Mammary epithelial cell (primary cell): ENCODE measurements at regions of chr19 and their contacts with region 1.

Region 1: DNA sequence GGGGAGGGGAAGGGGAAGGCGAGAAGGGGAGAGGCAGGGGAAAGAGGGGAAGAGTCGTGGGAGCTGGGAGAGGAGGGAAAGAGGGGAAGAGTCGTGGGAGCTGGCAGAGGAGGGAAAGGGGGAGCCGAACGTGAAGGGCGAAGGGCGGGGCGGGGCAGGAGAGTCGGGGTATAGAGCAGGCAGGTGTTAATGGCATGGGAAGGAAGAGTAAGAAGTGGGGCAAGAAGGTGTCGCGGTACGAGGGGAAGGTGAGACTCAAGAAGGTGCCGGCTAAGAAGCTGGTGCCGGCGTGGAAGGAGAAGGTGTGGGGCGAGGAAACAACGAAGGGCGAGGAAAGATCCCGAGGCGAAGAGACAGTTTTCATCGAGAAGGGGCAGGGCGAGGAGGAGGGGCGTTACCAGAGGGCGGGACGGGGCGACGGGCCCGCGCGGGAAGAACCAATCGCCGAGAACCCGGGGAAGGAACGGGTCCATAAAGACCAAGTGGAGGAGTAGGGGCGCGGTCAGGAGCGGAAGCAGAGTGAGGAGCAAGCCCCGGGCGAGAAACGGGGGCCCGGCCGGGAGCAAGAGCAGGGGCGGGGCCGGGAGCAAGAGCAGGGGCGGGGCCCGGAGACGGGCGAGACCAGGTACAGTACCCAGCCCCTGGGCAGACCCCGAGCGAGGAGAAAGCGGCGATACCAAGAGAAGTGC is 463 bp downstream of the CATSPERG start:
- DNase-seq: peak; percentile 97
- H3K4me3 ChIP-seq: peak overlapping the region; percentile 66 to 74 (median 69)
- H3K27ac ChIP-seq: peak overlapping the region; percentile 75
- H3K4me1 ChIP-seq: peaks cover 15% of the 10 kb centered on the region
- H3K27me3 ChIP-seq: no peaks in the 10 kb centered on the region
- CTCF ChIP-seq: no peak

Region 2: GRCh38 chr19:37699127-37699526 is 637.0 kb before region 1 on chr19:
- CTCF ChIA-PET with region 1: no interaction called
- dilution Hi-C with region 1: no loop called
- in situ Hi-C with region 1: no loop called
- intact Hi-C with region 1: no loop called
- DNase-seq: no peak
- H3K4me3 ChIP-seq: no peak overlapping the region
- H3K27ac ChIP-seq: no peak overlapping the region
- H3K4me1 ChIP-seq: no peaks in the 10 kb centered on the region
- H3K27me3 ChIP-seq: no peaks in the 10 kb centered on the region
- CTCF ChIP-seq: no peak

Region 3: DNA sequence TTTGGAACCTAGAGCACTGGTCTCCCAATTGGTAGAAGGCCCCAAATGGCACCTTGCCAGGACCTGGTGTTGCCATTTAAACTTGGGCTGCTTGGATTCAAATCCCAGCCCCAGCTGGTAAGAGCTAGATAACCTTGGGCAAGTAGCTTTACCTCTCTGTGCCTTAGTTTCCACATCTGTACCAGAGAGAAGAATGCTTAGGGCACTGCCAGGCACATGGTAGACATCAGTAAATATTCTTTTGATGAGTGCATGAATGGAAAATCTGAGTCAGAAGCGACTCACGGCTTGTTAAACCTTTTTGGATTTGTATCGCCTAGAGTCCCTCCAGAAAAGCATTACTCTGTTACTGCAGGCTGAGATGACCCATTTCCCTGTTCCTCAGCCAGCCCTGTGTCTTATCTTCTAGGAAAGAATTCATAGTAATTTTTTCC is 338.2 kb before region 1 on chr19:
- CTCF ChIA-PET with region 1: no interaction called
- dilution Hi-C with region 1: no loop called
- in situ Hi-C with region 1: no loop called
- intact Hi-C with region 1: loop called (anchors 10 kb)
- DNase-seq: peak; percentile 91
- H3K4me3 ChIP-seq: no peak overlapping the region
- H3K27ac ChIP-seq: peak overlapping the region; percentile 57
- H3K4me1 ChIP-seq: peaks cover 31% of the 10 kb centered on the region
- H3K27me3 ChIP-seq: no peaks in the 10 kb centered on the region
- CTCF ChIP-seq: no peak

Region 4: DNA sequence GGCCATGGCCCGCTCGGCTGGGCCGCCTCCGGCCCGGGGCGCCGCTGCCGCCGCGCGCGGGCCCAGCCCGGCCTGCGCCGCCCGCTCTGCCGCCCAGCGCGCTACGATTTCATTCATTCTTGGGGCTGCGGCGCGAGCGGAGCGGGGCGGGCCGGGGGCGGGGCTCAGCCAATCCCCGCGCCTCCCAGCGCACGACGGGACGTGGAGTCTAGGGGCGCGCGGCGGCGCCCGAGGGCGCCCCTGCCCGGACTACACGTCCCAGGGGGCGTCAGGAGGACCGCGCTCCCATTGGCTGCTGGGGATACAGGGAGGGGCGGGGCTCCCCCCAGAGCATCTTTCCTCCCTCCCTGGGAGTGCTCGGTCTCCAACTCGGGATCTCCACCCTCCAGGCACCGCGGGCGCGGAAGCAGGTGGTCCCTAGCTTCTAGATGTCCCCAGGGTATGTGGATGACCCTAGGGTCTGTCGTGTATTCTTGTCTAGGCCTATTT is 106.5 kb before region 1 on chr19:
- CTCF ChIA-PET with region 1: no interaction called
- dilution Hi-C with region 1: no loop called
- in situ Hi-C with region 1: no loop called
- intact Hi-C with region 1: loop called (anchors 2 kb)
- DNase-seq: peak; percentile 79
- H3K4me3 ChIP-seq: no peak overlapping the region
- H3K27ac ChIP-seq: no peak overlapping the region
- H3K4me1 ChIP-seq: peaks cover 14% of the 10 kb centered on the region
- H3K27me3 ChIP-seq: peaks cover 12% of the 10 kb centered on the region
- CTCF ChIP-seq: no peak

Region 5: GRCh38 chr19:38245826-38246498 is 90.1 kb before region 1 on chr19:
- CTCF ChIA-PET with region 1: no interaction called
- dilution Hi-C with region 1: no loop called
- in situ Hi-C with region 1: loop called (anchors 5 kb)
- intact Hi-C with region 1: loop called (anchors 1 kb)
- DNase-seq: no peak
- H3K4me3 ChIP-seq: no peak overlapping the region
- H3K27ac ChIP-seq: no peak overlapping the region
- H3K4me1 ChIP-seq: peaks cover 2% of the 10 kb centered on the region
- H3K27me3 ChIP-seq: no peaks in the 10 kb centered on the region
- CTCF ChIP-seq: no peak

Region 6: GRCh38 chr19:38321646-38322196 is 14.4 kb before region 1 on chr19:
- CTCF ChIA-PET with region 1: no interaction called
- dilution Hi-C with region 1: no loop called
- in situ Hi-C with region 1: no loop called
- intact Hi-C with region 1: loop called (anchors 1 kb)
- DNase-seq: peak; percentile 88
- H3K4me3 ChIP-seq: peak overlapping the region in 1 of 3 experiments; percentile 5
- H3K27ac ChIP-seq: peak overlapping the region; percentile 44
- H3K4me1 ChIP-seq: peaks cover 39% of the 10 kb centered on the region
- H3K27me3 ChIP-seq: no peaks in the 10 kb centered on the region
- CTCF ChIP-seq: no peak

Region 7: GRCh38 chr19:38374429-38375176 is 38.5 kb after region 1 on chr19 and contains the start of gene PSMD8:
- CTCF ChIA-PET with region 1: interaction called, 6 read pairs
- dilution Hi-C with region 1: no loop called
- in situ Hi-C with region 1: no loop called
- intact Hi-C with region 1: loop called (anchors 1 kb)
- DNase-seq: peak; percentile 99
- H3K4me3 ChIP-seq: peak within 1 kb of the TSS; percentile 79 to 94 (median 93)
- H3K27ac ChIP-seq: peak within 1 kb of the TSS; percentile 83
- H3K4me1 ChIP-seq: peaks cover 14% of the 10 kb centered on the region
- H3K27me3 ChIP-seq: no peaks in the 10 kb centered on the region
- CTCF ChIP-seq: peak in 1 of 2 donors; percentile 33
- total RNA-seq, gene PSMD8: 247 to 401 TPM

Region 8: DNA sequence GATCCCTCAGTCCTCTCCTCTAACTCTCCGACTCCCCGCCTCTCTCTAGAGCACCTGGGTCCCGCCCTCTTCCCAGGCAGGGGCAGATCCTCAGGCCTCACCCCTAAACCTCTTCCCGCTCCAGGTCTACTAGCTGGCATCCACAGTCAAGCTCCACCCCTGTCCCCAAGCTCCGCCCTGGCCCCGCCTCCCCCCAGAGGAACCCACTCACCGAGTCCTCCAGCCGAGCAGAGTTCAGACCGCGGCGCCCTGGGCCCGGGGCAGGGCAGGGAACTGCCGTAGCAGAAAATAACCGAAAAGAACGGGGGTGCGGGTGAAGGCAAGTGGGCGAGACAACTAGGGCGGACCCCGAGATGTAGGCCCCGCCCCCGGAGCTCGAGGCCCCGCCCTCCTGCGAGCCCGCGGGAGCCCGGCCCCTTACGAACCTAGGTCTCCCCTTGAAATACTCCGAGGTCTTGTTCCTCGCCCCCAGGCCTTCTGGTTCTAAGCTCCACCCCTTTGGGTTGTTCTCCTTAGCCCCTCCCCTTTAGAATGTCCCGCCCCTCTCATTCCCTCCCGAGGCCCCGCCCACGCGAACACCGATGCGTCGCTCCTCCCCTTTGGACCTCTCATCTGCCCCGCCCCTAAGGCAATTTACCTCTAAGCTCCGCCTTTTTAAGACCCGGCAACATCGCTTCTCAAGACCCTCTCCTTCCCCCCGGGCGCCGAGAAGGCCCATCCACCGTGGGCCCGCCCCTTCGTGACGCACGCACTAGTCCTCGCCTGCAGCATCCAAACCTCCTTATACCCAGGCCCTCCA is 51.7 kb after region 1 on chr19 and contains the start of gene GGN:
- CTCF ChIA-PET with region 1: no interaction called
- dilution Hi-C with region 1: no loop called
- in situ Hi-C with region 1: no loop called
- intact Hi-C with region 1: no loop called
- DNase-seq: peak; percentile 87
- H3K4me3 ChIP-seq: peak within 1 kb of the TSS; percentile 38 to 57 (median 50)
- H3K27ac ChIP-seq: no peak within 1 kb of the TSS
- H3K4me1 ChIP-seq: peaks cover 24% of the 10 kb centered on the region
- H3K27me3 ChIP-seq: no peaks in the 10 kb centered on the region
- CTCF ChIP-seq: no peak
- total RNA-seq, gene GGN: 0.17 to 0.68 TPM

Region 9: GRCh38 chr19:38402967-38403861 is 67.1 kb after region 1 on chr19 and contains the start of gene FAM98C:
- CTCF ChIA-PET with region 1: no interaction called
- dilution Hi-C with region 1: no loop called
- in situ Hi-C with region 1: no loop called
- intact Hi-C with region 1: no loop called
- DNase-seq: peak; percentile 94
- H3K4me3 ChIP-seq: peak within 1 kb of the TSS; percentile 58 to 94 (median 83)
- H3K27ac ChIP-seq: no peak within 1 kb of the TSS
- H3K4me1 ChIP-seq: no peaks in the 10 kb centered on the region
- H3K27me3 ChIP-seq: no peaks in the 10 kb centered on the region
- CTCF ChIP-seq: peak; percentile 76 to 93
- total RNA-seq, gene FAM98C: 10.5 to 14.9 TPM